ENCODE measurements at regions of chr3 and their contacts with region 1.

Region 1: GRCh38 chr3:157174649-157175498 is 14.9 kb upstream of the CCNL1 start:
- DNase-seq: peak; percentile 99 to 100
- ATAC-seq: peak; percentile 94 to 97 (median 95)
- H3K4me3 ChIP-seq: peak overlapping the region; percentile 73
- H3K27ac ChIP-seq: peak overlapping the region; percentile 93
- H3K4me1 ChIP-seq: peaks cover 9% of the 10 kb centered on the region
- H3K27me3 ChIP-seq: no peaks in the 10 kb centered on the region
- CTCF ChIP-seq: no peak

Region 2: DNA sequence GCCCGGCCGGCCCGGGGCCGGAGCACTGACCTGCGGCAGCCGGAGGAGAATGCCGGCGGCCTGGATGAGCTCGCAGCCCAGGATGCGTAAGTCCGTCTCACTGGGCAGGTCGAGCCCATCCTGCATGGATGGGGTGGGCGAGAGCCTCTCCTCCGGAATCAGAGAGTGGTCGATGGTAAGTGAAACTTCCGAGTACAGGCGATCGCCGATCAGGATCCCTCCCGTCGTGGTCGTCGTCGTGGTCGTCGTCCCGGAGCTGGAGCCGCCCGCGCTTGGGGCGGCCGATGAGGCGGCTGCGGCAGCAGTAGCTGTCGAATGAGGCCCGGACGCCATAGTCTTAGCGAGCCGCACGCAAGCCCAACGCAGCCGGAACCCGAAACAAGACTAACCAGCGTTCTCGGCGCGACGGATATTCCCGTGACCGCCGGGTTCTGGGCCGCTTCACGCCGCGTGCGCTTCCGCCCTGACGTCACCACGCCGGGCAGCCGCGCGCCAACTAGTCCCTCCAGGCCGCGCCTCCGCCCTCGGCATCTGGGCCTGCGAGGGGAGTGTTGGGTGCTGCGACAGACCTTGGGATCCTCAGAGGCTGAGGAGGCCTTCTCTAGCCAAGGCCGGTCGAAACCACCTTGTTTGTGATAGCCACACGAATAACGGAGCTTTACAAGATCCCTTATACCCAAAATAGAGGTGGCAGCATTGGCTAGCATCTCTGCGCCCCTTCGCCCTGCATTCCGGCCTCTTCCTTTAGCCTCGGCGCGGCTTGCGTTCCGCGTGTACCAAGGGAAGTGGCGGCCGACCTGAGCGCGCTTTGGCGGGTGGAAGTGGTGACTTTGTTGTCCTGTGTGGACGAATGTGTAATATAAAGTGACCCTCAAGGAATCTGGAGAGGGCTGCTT is 14.9 kb before region 1 on chr3 and contains the start of gene CCNL1:
- intact Hi-C with region 1: loop called (anchors 1 kb)
- DNase-seq: peak; percentile 98
- ATAC-seq: peak; percentile 91 to 95 (median 94)
- H3K4me3 ChIP-seq: peak within 1 kb of the TSS; percentile 97
- H3K27ac ChIP-seq: peak within 1 kb of the TSS; percentile 100
- H3K4me1 ChIP-seq: peaks cover 48% of the 10 kb centered on the region
- H3K27me3 ChIP-seq: no peaks in the 10 kb centered on the region
- CTCF ChIP-seq: no peak
- total RNA-seq, gene CCNL1: 21.8 to 55.5 (median 42.9) TPM

Measured in psoas muscle (tissue), 8 donors.